HEK293T (cell line): ENCODE measurements at regions of chr10 and their contacts with region 1.

Region 1: DNA sequence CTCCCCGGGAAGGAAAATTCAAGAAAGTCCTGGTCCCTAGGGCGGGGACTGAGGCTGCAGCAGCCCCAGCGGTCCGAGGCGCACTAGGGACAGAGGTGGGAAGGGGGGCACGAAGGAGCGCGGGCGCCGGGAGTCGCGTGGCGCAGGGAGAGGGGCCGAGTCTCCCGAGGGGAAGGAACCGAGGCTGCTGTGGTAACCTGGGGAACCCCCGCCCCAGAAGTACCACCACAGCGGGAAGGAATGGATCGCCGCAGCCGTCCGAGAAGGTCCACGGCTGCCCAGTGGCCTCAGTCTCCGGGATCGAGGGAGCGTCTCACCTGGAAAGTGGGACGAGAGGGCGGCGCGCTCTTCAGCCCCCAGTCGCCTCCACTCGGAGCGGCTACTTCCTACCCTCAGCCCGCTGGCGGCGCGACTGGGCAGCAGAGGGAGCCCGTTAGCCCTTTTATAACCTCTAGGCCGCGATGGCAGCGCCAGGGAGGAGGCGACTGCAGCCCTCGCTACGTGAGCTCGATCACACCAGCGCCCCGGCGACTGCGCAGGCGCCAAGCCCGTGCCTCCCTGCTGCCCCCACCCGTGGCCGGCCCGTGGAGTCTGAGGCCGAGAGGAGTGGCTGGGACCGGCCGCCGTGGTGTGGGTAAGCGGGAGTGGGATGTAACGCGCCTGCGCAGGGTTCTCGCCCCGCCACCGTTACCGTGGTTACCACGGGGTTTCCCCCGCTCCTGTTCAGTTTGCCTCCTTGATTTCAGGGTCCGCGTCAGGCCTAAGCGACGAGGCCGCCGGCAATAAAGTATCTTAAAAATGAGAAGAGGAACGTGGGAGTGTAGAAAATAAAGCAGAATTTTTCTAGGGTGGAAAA is at the start of gene P4HA1:
- DNase-seq: peak; percentile 97

Region 2: GRCh38 chr10:73110345-73110849 is 13.7 kb after region 1 on chr10 and contains the start of gene NUDT13:
- CTCF ChIA-PET with region 1: interaction called, 6 read pairs
- POLR2A ChIA-PET with region 1: interaction called, 61 read pairs
- DNase-seq: peak; percentile 74

Region 3: DNA sequence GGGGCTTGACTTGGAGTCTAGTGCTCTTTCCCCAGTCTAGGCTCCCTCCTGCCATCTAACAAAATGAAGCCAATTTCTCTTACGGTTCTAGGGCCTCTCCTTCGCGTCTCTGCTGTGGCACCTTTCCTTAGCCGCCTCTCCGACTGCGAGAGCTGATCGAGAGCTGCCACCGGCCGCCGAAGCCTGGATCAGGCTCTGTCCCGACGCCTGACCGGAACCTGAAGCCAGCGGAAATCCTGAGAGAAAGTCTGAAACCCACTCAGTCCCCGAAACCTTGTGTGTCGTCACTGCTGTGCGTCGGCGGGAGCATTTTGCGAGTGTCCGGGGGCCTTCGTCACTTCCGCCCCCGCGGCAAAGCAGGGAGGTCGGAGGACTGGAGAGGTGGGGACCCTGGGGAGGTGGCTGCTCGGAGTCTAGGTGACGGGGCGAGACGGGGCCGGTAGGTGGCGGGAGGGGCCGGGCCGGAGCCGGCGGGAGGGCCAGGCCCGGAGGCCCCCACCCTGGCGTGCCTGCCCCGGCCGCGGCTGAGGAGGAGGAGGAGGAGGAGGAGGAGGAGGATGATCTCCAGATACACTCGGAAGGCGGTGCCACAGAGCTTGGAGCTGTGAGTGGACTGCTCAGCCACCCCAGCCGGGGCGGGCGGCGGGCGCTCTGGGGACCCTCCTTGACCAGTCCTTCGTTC is 71.2 kb after region 1 on chr10 and contains the starts of genes ECD and FAM149B1:
- CTCF ChIA-PET with region 1: interaction called, 4 read pairs
- POLR2A ChIA-PET with region 1: interaction called, 13 read pairs
- DNase-seq: peak; percentile 89

Region 4: GRCh38 chr10:73232887-73233286 is 136.2 kb after region 1 on chr10:
- CTCF ChIA-PET with region 1: no interaction called
- POLR2A ChIA-PET with region 1: no interaction called
- DNase-seq: peak; percentile 37